OCI-LY7 (cell line): ENCODE measurements at regions of chr3 and their contacts with region 1.

Region 1: GRCh38 chr3:119380697-119381096 is 82.7 kb downstream of the TMEM39A start:
- DNase-seq: no peak
- H3K4me3 ChIP-seq: no peak overlapping the region
- H3K27ac ChIP-seq: no peak overlapping the region
- H3K4me1 ChIP-seq: no peaks in the 10 kb centered on the region
- CTCF ChIP-seq: no peak; the same call in 1 of the 2 replicates

Region 2: GRCh38 chr3:119352849-119353502 is 27.7 kb before region 1 on chr3:
- CTCF ChIA-PET with region 1: no interaction called
- POLR2A ChIA-PET with region 1: no interaction called
- intact Hi-C with region 1: no loop called
- DNase-seq: peak; percentile 67
- H3K4me3 ChIP-seq: no peak overlapping the region
- H3K27ac ChIP-seq: peak overlapping the region; percentile 37
- H3K4me1 ChIP-seq: peaks cover 25% of the 10 kb centered on the region
- CTCF ChIP-seq: peak; percentile 66

Region 3: GRCh38 chr3:119469381-119470189 is 88.9 kb after region 1 on chr3:
- CTCF ChIA-PET with region 1: interaction called, 3 read pairs
- POLR2A ChIA-PET with region 1: interaction called, 4 read pairs
- intact Hi-C with region 1: loop called (anchors 5 kb)
- DNase-seq: peak; percentile 50
- H3K4me3 ChIP-seq: peak overlapping the region; percentile 82
- H3K27ac ChIP-seq: peak overlapping the region; percentile 47
- H3K4me1 ChIP-seq: peaks cover 19% of the 10 kb centered on the region
- CTCF ChIP-seq: no peak; the same call in 1 of the 2 replicates

Region 4: DNA sequence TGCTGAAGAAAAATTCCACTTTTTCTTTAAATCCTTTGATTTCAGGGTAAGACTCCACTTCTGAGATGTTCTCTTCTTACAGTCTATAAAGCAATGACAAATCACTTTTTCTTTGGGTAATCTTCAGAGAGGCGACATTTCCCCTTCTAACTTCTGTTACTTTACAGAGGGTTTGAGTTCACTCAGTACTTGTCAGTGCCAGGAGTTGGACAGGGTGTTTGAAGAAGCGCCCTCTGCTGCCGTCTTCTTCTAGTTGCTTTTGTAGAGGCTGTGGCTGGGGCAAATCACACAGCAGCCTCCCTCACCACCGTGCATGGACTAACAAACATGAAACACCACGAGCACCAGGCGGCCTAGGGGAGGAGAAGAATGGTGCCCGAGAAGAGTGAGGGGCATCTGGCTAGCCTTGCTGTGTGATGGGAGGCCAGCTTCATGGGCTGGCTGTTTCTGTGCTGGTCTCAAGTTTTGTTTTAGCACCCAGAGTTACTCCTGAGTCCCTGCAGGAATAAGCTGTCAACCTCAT is 178.8 kb after region 1 on chr3 and contains the start of gene CD80:
- CTCF ChIA-PET with region 1: no interaction called
- POLR2A ChIA-PET with region 1: interaction called, 3 read pairs
- intact Hi-C with region 1: loop called (anchors 10 kb)
- DNase-seq: peak; percentile 70
- H3K4me3 ChIP-seq: no peak within 1 kb of the TSS
- H3K27ac ChIP-seq: no peak within 1 kb of the TSS
- H3K4me1 ChIP-seq: peaks cover 3% of the 10 kb centered on the region
- CTCF ChIP-seq: peak; percentile 71
- total RNA-seq, gene CD80: not detected in 2 replicates